ENCODE measurements at regions of chr6 and their contacts with region 1.

Region 1: DNA sequence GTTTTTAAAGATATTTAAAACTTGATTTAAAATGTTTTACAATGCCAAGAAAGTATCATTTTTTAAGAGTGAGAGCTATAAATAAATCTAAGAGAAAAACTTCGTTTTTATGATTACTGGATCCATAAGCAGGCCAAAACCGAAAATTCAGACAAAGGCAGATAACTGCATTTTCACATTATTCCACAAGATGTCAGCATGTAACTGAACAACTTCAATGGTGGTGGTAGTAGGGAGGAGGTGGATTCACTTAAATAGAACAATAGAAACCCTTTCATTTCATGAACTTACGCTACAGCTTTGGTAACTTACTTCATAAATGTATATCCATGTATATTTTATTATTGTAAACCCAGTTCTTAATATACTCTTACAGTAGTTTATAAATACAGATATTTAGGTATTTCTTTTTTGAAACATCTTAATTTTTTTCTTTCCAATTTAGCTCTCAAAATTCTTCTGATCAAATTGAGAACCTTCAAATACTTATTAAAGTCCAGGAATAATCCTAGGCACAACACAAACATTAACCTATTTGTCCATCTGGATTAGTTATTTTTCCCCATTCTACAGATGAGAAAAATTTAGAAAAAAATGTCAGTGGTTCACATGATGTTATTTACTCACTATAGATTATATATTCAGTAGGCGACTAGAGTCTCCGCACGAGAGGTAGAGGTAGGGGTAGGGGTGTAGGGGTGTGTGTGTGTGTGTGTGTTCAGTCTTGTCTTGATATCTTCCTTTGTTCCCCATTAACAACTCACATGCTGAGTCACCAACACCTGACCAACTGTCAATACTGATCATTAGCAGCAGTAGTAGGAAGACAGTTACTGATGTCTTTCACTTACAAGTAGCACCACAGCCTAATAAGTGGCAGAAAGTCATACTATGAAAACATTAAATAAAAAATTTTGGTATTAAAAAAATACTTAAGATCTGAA is 111.5 kb downstream of the ARHGAP18 start:
- DNase-seq: peak; percentile 77
- H3K4me3 Mint-ChIP-seq: no peak overlapping the region
- H3K27ac Mint-ChIP-seq: no peak overlapping the region
- H3K4me1 Mint-ChIP-seq: no peaks in the 10 kb centered on the region
- H3K27me3 Mint-ChIP-seq: no peaks in the 10 kb centered on the region
- CTCF ChIP-seq: peak; percentile 71

Region 2: DNA sequence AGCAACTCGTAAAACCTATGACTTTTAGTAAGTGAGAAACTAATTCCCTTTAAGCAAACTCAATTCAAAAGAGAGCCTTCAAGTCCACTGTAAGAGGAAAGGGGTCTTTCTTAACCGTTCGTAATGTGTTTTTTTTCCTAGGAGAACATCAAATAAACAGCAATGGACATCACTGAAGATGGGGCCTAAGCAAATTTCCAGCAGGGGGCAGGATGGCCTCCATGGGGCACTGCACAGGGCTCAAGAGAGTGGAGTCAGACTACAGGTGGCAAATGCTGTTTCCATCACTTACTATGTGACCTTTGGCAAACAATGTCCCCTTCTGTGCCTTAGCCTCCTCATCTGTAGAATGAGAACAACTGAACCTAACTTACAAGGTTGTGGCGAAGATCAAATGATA is 22.7 kb after region 1 on chr6:
- CTCF ChIA-PET with region 1: interaction called, 10 read pairs
- POLR2A ChIA-PET with region 1: interaction called, 3 read pairs
- intact Hi-C with region 1: no loop called
- DNase-seq: peak; percentile 26
- H3K4me3 Mint-ChIP-seq: no peak overlapping the region
- H3K27ac Mint-ChIP-seq: no peak overlapping the region
- H3K4me1 Mint-ChIP-seq: peaks cover 14% of the 10 kb centered on the region
- H3K27me3 Mint-ChIP-seq: no peaks in the 10 kb centered on the region
- CTCF ChIP-seq: peak; percentile 19

Region 3: GRCh38 chr6:129667621-129668020 is 69.1 kb after region 1 on chr6:
- CTCF ChIA-PET with region 1: interaction called, 11 read pairs
- POLR2A ChIA-PET with region 1: interaction called, 4 read pairs
- intact Hi-C with region 1: loop called (anchors 1 kb)
- DNase-seq: peak; percentile 84
- H3K4me3 Mint-ChIP-seq: no peak overlapping the region
- H3K27ac Mint-ChIP-seq: no peak overlapping the region
- H3K4me1 Mint-ChIP-seq: peaks cover 35% of the 10 kb centered on the region
- H3K27me3 Mint-ChIP-seq: no peaks in the 10 kb centered on the region
- CTCF ChIP-seq: no peak

Region 4: DNA sequence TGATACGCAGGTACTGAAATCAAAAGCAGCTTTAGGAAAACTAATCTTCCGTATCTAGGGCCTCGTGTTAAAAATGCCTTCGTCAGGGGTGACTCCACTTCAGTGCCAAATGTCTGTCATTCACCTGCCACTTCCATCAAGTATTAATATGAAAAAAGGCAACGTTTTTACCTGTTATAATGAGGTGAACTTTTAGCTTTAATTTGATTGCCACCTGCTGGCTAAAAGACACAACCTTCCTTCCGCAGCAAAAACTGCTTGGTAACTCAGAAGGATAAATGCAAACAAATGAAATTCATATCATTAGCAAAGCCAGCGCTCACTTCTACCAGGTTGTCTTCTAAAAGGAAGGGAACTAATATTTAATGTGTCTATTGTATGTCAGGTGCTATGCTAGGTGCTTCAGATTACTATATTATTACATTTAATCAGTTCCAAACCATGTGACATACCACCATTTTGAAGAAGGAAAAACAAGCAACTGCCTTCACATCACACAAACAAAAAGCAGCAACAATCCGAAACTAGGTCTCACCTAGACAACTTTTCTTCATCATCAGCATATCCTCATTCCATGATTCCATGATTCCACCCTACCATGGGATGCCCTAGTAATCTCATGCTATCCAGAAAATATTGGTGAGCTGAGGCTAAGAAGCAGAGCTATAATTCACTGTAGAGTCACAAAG is 132.1 kb after region 1 on chr6:
- CTCF ChIA-PET with region 1: interaction called, 315 read pairs
- POLR2A ChIA-PET with region 1: interaction called, 26 read pairs
- intact Hi-C with region 1: loop called (anchors 1 kb)
- DNase-seq: peak; percentile 61
- H3K4me3 Mint-ChIP-seq: no peak overlapping the region
- H3K27ac Mint-ChIP-seq: no peak overlapping the region
- H3K4me1 Mint-ChIP-seq: peaks cover 22% of the 10 kb centered on the region
- H3K27me3 Mint-ChIP-seq: no peaks in the 10 kb centered on the region
- CTCF ChIP-seq: peak; percentile 56

Region 5: DNA sequence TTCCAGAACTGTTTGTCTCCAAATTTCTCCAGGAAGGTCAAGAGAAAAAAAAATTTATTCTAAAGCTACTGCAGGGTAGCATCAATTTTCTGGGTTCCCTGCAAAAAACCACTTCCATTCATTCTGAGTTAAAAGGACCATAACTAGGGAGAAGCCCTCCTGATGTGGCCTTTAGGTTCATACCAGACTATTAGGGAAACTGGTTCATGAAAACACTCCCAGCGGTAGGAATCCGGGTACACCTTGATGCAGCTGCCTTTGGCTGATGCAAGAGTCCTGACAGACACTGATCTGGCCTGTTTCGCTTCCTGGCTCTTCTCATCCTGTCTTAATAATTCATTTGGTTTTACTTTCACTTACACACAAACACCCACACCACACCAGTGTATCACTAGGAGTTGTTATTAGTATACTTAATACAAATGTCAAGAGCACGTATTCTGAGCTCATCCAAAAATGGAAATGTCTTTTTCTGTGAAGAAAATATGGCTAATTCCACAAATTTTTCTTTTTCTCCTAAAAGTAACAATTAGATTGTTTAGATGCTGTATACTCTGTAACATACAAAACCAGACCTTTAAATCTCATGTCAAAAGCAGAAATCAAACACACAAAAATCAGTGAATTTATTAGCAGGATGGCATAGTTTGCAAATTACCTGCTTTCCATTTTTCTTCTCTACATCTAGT is 149.8 kb after region 1 on chr6:
- CTCF ChIA-PET with region 1: interaction called, 18 read pairs
- POLR2A ChIA-PET with region 1: interaction called, 7 read pairs
- intact Hi-C with region 1: no loop called
- DNase-seq: peak; percentile 93
- H3K4me3 Mint-ChIP-seq: peak overlapping the region; percentile 47
- H3K27ac Mint-ChIP-seq: peak overlapping the region; percentile 87
- H3K4me1 Mint-ChIP-seq: peaks cover 36% of the 10 kb centered on the region
- H3K27me3 Mint-ChIP-seq: no peaks in the 10 kb centered on the region
- CTCF ChIP-seq: peak; percentile 28

Region 6: GRCh38 chr6:129936329-129937165 is 338.0 kb after region 1 on chr6:
- CTCF ChIA-PET with region 1: interaction called, 6 read pairs
- POLR2A ChIA-PET with region 1: no interaction called
- intact Hi-C with region 1: loop called (anchors 1 kb)
- DNase-seq: peak; percentile 90
- H3K4me3 Mint-ChIP-seq: peak overlapping the region; percentile 41
- H3K27ac Mint-ChIP-seq: no peak overlapping the region
- H3K4me1 Mint-ChIP-seq: no peaks in the 10 kb centered on the region
- H3K27me3 Mint-ChIP-seq: no peaks in the 10 kb centered on the region
- CTCF ChIP-seq: peak; percentile 53

Measured in MCF 10A (cell line).